ENCODE measurements at regions of chr21 and their contacts with region 1.

Region 1: GRCh38 chr21:42973991-42974831 is at the start of gene PKNOX1:
- DNase-seq: peak; percentile 85
- H3K4me3 ChIP-seq: peak within 1 kb of the TSS; percentile 70
- CTCF ChIP-seq: no peak

Region 2: GRCh38 chr21:42991992-42992740 is 18.0 kb after region 1 on chr21:
- CTCF ChIA-PET with region 1: no interaction called
- POLR2A ChIA-PET with region 1: interaction called, 13 read pairs
- DNase-seq: peak; percentile 62
- H3K4me3 ChIP-seq: no peak overlapping the region
- CTCF ChIP-seq: no peak